Aorta (tissue), 5 donors: ENCODE measurements at regions of chr19 and their contacts with region 1.

Region 1: GRCh38 chr19:44770550-44771257 is 7.0 kb upstream of the CBLC start:
- DNase-seq: peak; percentile 95 to 96
- ATAC-seq: peak; percentile 94
- H3K4me3 ChIP-seq: no peak overlapping the region
- H3K27ac ChIP-seq: no peak overlapping the region
- H3K4me1 ChIP-seq: no peaks in the 10 kb centered on the region
- H3K27me3 ChIP-seq: no peaks in the 10 kb centered on the region

Region 2: GRCh38 chr19:44689056-44689895 is 81.4 kb before region 1 on chr19:
- intact Hi-C with region 1: loop called in 1 of 2 experiments (anchors 1 kb)
- DNase-seq: peak; percentile 84 to 92
- ATAC-seq: peak; percentile 75
- H3K4me3 ChIP-seq: no peak overlapping the region
- H3K27ac ChIP-seq: no peak overlapping the region
- H3K4me1 ChIP-seq: no peaks in the 10 kb centered on the region
- H3K27me3 ChIP-seq: no peaks in the 10 kb centered on the region